ENCODE measurements at regions of chr17 and their contacts with region 1.

Region 1: DNA sequence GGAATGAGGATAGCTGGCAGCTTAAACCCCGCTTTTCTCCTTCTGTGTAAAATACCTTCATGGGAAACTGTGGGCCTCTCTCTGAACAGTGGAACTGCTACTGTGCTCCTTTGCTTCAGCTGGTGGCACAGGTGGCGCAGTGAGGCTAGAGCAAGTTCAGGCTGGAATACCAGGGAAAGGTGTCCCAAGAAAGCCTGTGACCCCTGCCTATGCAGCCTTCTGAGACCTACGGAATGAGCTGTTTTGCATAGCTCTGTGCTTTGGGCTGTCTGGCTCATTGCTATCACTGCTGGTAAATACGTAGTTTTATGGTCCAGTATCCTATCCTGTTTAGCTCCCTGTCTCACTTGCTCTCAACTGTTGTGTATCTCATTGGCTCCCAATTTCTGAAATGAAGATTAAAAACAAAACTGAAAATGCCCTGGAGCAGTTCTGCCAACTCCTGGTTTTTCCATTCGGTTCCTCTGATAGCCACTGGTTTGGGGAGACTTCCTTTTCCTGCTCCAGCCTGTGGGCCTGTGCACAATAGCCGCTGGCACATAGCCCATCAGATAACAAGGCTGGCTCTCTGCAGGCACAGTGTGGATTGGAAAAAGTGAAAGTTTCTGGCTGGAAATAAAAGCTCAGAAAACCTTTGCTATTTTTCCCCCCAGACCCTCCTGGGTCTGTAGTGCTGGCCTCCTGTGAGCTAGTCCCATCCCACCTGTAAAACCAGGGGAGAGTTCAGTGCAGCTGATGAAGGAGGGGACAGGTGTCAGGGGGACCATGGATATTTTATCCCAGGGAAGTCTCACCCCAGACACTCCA is 24.1 kb downstream of the LIMD2 start:
- DNase-seq: no peak
- ATAC-seq: peak; percentile 38
- H3K4me3 Mint-ChIP-seq: no peak overlapping the region
- H3K27ac Mint-ChIP-seq: peak overlapping the region; percentile 73
- H3K4me1 Mint-ChIP-seq: peaks cover 43% of the 10 kb centered on the region
- H3K27me3 Mint-ChIP-seq: no peaks in the 10 kb centered on the region
- CTCF ChIP-seq: no peak

Region 2: GRCh38 chr17:63621766-63622519 is 53.9 kb before region 1 on chr17 and contains the start of gene MAP3K3:
- CTCF ChIA-PET with region 1: interaction called, 17 read pairs
- POLR2A ChIA-PET with region 1: interaction called, 7 read pairs
- DNase-seq: peak; percentile 99
- ATAC-seq: peak; percentile 91
- H3K4me3 Mint-ChIP-seq: peak within 1 kb of the TSS; percentile 98
- H3K27ac Mint-ChIP-seq: peak within 1 kb of the TSS; percentile 91
- H3K4me1 Mint-ChIP-seq: peaks cover 25% of the 10 kb centered on the region
- H3K27me3 Mint-ChIP-seq: no peaks in the 10 kb centered on the region; the same call in 1 of the 2 replicates
- CTCF ChIP-seq: no peak
- total RNA-seq, gene MAP3K3: 21.8 to 25.7 TPM (median 22.5 TPM) in 3 replicates

Region 3: DNA sequence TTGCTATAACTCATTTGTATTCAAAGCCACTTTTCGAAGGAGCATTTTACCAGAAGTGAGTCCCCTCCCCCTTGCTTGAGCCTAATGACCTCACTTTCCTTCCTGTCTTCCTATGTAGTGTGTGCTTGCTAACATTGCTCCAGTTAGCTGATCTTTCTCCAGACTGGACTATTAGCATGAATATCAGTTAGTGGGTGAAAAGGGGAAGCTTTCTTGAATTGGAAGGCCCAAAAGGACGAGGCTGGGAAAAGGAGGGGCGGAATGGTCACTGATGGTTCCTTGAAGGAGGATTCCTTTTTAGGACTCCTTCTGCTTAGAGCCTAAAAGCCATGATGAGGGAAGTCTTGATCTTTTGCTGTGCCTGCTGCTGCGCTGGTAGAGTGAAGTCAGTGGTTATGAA is 41.6 kb before region 1 on chr17:
- CTCF ChIA-PET with region 1: interaction called, 10 read pairs
- POLR2A ChIA-PET with region 1: no interaction called
- DNase-seq: no peak
- ATAC-seq: peak; percentile 70
- H3K4me3 Mint-ChIP-seq: no peak overlapping the region
- H3K27ac Mint-ChIP-seq: peak overlapping the region; percentile 85
- H3K4me1 Mint-ChIP-seq: peaks cover 47% of the 10 kb centered on the region
- H3K27me3 Mint-ChIP-seq: no peaks in the 10 kb centered on the region
- CTCF ChIP-seq: no peak

Region 4: DNA sequence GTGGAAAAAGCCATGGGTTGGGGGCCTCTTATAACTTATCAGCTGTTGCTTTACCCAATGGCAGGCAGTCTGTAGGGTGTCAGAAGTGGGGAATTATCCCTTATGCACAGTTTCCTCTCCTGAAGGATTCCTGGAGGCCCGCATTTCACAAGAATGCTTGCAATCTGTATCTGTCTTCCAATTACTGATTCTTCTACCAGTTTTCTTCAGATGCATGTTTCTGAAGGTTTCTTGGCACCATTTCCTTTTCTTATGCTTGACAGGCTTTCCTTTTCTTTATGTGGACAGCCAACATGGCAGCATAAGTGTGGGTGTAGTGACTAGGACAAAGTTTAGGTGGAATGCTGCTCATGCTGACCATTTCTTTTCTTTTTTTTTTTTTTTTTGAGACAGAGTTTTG is 17.4 kb before region 1 on chr17:
- CTCF ChIA-PET with region 1: interaction called, 11 read pairs
- POLR2A ChIA-PET with region 1: no interaction called
- DNase-seq: no peak
- ATAC-seq: no peak
- H3K4me3 Mint-ChIP-seq: no peak overlapping the region
- H3K27ac Mint-ChIP-seq: no peak overlapping the region
- H3K4me1 Mint-ChIP-seq: peaks cover 2% of the 10 kb centered on the region; the same call in 1 of the 2 replicates
- H3K27me3 Mint-ChIP-seq: no peaks in the 10 kb centered on the region
- CTCF ChIP-seq: no peak

Region 5: DNA sequence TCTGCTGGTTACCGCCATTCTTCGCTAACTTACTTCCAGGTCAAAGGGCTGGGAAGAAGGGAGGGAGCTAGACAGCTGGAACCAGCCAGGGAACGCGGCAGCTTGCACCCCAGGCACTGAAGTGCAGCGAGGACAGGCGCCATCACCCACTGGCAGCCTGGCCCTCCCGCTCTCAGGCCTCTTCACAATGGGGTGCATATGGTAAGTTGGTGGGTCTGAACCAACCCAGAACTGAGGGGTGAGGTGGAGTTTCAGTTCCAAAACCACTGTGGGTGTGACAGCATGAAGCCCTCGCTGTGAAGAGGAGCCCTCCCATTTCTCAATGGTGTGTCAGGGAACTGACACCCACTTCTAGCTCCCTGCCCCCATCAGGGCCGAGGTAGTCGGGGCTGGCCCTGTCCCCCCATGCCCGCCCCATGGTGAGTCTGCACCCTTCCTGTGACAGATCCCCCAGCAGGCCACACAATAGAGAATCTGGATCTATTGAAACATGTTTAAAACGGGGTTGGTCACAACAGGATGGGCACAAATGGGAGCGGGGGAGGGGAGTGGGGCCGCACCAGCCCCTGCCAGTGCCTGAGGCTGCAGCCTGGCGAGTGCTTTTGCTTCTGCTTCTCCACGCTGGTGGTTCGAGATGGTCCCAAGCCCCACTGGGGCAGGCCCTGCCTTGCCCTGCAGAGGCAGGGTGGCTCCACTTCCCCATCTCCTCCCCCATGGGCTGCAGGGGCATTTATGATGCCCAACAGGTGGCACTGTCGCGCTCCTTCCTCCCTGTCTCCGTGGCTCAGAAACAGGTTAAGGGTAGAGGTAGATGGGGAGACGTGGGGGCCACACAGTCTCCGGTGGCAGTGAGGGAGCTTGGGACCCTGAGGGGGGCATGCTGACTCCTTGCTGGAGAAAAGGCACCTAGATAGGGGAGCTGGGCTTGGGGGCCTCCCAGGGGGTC is 21.8 kb after region 1 on chr17:
- CTCF ChIA-PET with region 1: interaction called, 22 read pairs
- POLR2A ChIA-PET with region 1: interaction called, 3 read pairs
- DNase-seq: peak; percentile 70
- ATAC-seq: peak; percentile 3
- H3K4me3 Mint-ChIP-seq: peak overlapping the region; percentile 69
- H3K27ac Mint-ChIP-seq: peak overlapping the region; percentile 70
- H3K4me1 Mint-ChIP-seq: peaks cover 47% of the 10 kb centered on the region
- H3K27me3 Mint-ChIP-seq: peaks cover 6% of the 10 kb centered on the region; the same call in 1 of the 2 replicates
- CTCF ChIP-seq: peak; percentile 20

Measured in WTC11 (cell line).